H1 (cell line): ENCODE measurements at regions of chr16 and their contacts with region 1.

Region 1: GRCh38 chr16:49639739-49640431 is 216.0 kb downstream of the ZNF423 start:
- DNase-seq: peak; percentile 13 to 66
- H3K4me3 ChIP-seq: no peak overlapping the region; a peak in 1 of 8 replicates
- H3K27ac ChIP-seq: peak overlapping the region; percentile 66; the same call in 1 of the 2 replicates
- H3K4me1 ChIP-seq: peaks cover 8 to 38% (median 27%) of the 10 kb centered on the region in 4 experiments
- H3K27me3 ChIP-seq: no peaks in the 10 kb centered on the region
- CTCF ChIP-seq: no peak
- EP300 ChIP-seq: no peak
- POLR2A ChIP-seq: no peak
- RAD21 ChIP-seq: 0 out of 4 replicates have a peak, but pooled peaks of 1 of the 2 experiments have one; percentile 7

Region 2: DNA sequence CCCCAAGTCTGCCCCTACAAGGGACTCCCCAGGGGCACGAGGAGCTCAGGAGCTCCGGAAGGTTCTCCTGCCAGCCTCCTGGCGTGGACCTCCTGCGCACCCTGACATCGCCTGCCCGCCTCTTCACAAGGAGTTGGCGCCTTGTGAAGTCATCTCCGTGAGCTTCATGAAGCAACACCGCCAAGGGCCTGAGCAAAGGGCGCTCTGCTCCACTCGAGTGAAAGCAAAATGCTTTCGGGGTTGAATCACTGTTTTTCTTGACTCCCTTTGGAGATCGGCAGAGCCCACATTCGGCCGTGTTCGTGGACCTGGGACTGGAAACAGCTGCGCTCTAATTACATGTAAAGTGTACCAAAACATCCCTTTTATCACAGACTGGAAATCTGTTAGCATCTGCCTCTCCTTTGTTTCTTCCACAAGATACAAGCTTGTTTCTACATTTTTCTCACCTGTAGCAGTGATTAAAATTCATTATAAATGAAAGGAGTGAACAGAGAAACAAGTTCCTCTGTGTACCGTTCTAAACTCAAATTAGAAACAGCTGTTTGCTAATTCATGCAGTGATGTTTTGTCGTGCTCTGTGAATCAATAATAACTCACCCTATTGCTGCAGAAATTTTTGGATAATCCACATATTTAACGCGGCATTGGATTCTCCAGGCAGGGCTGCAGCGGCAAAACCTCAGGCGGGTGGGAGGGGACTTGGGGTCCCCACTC is 12.7 kb after region 1 on chr16:
- CTCF ChIA-PET with region 1: interaction called, 11 read pairs
- POLR2A ChIA-PET with region 1: interaction called, 8 read pairs
- DNase-seq: no peak
- H3K4me3 ChIP-seq: no peak overlapping the region
- H3K27ac ChIP-seq: no peak overlapping the region
- H3K4me1 ChIP-seq: peaks cover 0 to 6% (median 0%) of the 10 kb centered on the region in 4 experiments; a peak in 2 of 7 replicates
- H3K27me3 ChIP-seq: no peaks in the 10 kb centered on the region
- CTCF ChIP-seq: no peak
- EP300 ChIP-seq: no peak
- POLR2A ChIP-seq: no peak
- RAD21 ChIP-seq: no peak

Region 3: GRCh38 chr16:49701789-49702494 is 62.1 kb after region 1 on chr16:
- CTCF ChIA-PET with region 1: interaction called, 10 read pairs
- POLR2A ChIA-PET with region 1: no interaction called
- DNase-seq: peak in 1 of 2 experiments; percentile 74
- H3K4me3 ChIP-seq: peak overlapping the region in 3 of 4 experiments; percentile 3 to 47 (median 21); a peak in 4 of 8 replicates
- H3K27ac ChIP-seq: peak overlapping the region; percentile 79; the same call in 1 of the 2 replicates
- H3K4me1 ChIP-seq: peaks cover 51 to 66% (median 57%) of the 10 kb centered on the region in 4 experiments
- H3K27me3 ChIP-seq: no peaks in the 10 kb centered on the region
- CTCF ChIP-seq: no peak
- EP300 ChIP-seq: peak in 1 of 2 experiments; percentile 97; a peak in 2 of 3 replicates
- POLR2A ChIP-seq: no peak
- RAD21 ChIP-seq: no peak

Region 4: DNA sequence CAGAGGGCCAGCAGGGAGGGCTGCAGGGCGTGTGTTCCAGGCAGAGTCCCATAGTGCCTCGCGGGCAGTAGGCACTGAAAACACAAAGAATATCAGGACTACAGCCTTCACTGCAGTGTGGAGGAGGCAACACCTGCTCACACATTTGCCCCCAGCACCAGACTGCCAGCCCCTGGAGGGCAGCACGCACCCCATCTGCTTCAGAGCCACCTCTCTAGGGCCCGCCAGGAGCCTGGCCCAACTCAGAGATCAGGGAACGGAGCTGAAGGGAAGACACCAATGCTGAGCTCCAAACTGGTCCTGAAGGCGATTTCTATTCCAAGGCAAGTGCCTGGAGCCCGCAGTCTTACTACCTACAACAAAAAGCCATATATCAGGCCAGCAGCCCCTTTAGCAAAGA is 85.8 kb after region 1 on chr16:
- CTCF ChIA-PET with region 1: no interaction called
- POLR2A ChIA-PET with region 1: no interaction called
- DNase-seq: no peak
- H3K4me3 ChIP-seq: no peak overlapping the region
- H3K27ac ChIP-seq: no peak overlapping the region
- H3K4me1 ChIP-seq: peaks cover 0 to 2% (median 0%) of the 10 kb centered on the region in 4 experiments; a peak in 1 of 7 replicates
- H3K27me3 ChIP-seq: no peaks in the 10 kb centered on the region
- CTCF ChIP-seq: no peak
- EP300 ChIP-seq: no peak
- POLR2A ChIP-seq: no peak
- RAD21 ChIP-seq: no peak

Region 5: DNA sequence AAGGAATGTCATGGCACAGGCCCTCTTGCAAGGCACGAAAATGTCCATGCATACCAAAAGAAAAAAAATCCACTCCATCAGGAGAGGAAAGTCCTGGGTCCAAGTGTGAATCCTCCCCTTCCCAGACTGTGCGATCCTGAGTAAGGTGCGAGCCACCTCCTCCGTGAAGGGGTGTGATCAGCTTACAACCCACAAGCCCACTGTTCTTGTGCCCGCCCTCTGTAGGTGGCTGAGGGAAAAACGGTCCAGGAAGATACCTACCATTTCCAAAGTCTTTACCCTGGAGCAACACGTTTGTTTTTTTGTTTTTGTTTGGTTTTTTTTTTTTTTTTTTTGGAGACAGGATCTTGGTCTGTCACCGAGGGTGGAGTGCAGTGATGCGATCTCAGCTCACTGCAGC is 99.5 kb after region 1 on chr16:
- CTCF ChIA-PET with region 1: interaction called, 12 read pairs
- POLR2A ChIA-PET with region 1: no interaction called
- DNase-seq: peak in 1 of 2 experiments; percentile 67
- H3K4me3 ChIP-seq: no peak overlapping the region
- H3K27ac ChIP-seq: no peak overlapping the region
- H3K4me1 ChIP-seq: peaks cover 0 to 3% (median 2%) of the 10 kb centered on the region in 4 experiments; a peak in 4 of 7 replicates
- H3K27me3 ChIP-seq: no peaks in the 10 kb centered on the region
- CTCF ChIP-seq: peak; percentile 52 to 74 (median 61)
- EP300 ChIP-seq: no peak
- POLR2A ChIP-seq: no peak
- RAD21 ChIP-seq: peak; percentile 57 to 60